Activated T-helper 1 cell treated with anti-CD3 and anti-CD28 coated beads, Interleukin-12 subunit alpha, Interleukin-12 subunit beta, Interleukin-2, Interleukin-4 antibody, amounts not matched to agents 30 ng/mL and 10 ng/mL and 1 ng/mL, durations not matched to agents 14 hours and 24 hours and 36 hours (primary cell): ENCODE measurements at regions of chr17 and their contacts with region 1.

Region 1: DNA sequence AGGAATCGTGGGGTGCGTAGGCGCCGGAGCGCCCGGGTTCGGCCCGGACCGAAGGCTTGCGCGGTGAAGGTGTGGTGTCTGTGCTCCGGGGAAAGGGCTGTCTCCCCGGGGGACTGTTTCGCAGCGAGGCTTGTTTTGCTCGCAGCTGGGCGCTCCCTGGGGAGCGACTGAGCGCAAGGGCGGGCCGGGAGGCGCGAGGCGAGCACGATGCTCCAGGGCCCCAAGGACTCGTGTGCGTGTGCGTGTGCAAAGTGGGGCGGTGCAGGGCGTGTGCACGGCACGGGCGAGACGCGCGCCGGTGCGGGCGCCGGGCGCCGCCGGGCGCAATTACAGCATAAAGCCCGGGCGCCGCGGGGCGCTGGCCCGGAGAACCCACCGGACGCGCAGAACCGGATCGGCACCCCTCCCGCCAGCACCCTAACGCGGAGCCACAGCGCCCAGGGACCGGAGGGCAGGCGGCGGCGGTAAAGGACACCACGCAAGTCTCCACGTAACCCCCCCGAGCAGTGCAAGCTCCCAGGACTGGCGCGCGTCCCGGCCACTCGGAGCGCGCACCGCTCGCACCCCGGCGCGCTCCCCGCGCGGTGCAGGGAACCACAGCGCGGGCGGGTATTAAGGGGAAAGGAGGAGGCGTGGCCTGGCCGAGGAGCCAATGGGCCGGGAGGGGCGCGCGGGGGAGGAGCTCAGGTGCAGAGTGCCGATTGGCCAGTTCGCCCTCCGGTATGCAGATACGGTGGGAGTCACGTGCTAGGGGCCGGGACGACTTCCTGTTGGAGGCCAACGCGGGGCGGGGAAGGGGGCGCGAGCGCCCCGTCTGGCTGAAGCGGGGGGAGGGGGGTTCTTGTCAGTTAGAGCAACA is at the start of gene TNRC6C:
- DNase-seq: peak; percentile 99
- H3K4me3 Mint-ChIP-seq: peak within 1 kb of the TSS; percentile 95
- H3K27ac Mint-ChIP-seq: peak within 1 kb of the TSS; percentile 89
- H3K4me1 Mint-ChIP-seq: peaks cover 44% of the 10 kb centered on the region
- H3K27me3 Mint-ChIP-seq: peaks cover 42% of the 10 kb centered on the region
- total RNA-seq, gene TNRC6C: 15.5 and 19.6 TPM in 2 replicates

Region 2: DNA sequence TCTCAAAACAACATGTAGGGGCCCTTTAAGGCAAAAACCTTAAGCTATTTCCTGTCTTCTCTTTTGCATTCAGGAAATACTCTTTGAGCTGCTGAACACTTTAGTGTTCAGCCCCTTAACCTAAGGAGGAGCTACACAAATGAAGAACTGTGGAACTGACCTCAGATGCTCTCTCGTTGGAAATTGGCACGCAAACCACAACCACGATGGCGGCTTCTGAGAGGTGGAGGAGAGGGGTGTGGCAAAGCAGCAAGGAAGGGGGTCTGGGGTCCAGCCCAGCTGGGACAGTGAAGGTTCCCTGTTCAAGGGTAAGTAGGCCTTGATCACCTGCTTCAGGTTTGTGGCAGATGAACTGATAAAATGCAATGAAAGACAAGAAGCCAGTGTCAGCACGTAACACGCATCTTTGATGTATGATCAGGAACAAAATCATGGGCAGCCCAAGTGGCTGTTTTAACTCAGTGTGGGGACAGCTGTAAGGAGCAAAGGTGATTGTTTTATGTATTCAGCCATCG is 291.1 kb before region 1 on chr17:
- intact Hi-C with region 1: loop called (anchors 1 kb)
- DNase-seq: peak; percentile 77
- H3K4me3 Mint-ChIP-seq: peak overlapping the region; percentile 88
- H3K27ac Mint-ChIP-seq: peak overlapping the region; percentile 97
- H3K4me1 Mint-ChIP-seq: peaks cover 35% of the 10 kb centered on the region
- H3K27me3 Mint-ChIP-seq: no peaks in the 10 kb centered on the region

Region 3: DNA sequence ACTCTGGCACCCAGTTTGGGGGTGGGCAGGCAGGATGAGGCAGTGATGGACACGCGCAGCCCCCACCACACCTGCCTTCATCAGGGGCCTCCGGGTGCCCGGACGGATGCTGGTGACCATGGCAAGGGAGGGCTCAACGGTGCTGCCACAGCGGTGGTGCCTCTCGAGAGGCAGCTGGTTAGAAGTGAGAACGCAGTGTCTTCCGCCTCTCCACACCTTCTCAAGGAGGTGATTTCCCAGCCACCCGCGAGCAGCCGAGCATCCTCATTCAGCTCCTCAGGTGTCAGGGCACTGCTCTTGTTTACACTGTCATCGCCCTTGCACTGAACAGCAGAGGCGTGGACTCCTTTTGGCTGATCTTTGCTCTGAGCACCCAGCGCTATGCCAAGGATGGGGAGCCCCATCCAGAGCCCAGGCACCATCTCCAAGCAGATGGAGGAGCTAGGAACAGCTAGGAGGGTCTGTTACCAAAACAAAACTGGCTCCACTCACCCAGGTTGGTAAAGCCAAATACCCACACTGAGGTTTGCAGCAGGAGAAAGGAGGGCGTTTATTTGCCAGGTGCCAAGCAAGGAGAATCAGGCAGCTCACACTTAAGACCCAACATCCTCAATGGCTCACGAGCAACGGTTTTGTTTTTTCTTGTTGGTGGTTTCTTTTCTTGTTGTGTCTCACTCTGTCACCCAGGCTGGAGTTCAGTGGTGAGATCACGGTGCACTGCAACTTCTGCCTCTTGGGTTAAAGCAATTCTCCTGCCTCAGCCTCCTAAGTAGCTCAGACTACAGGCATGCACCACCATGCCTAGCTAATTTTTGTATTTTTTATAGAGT is 173.9 kb before region 1 on chr17:
- intact Hi-C with region 1: loop called (anchors 1 kb)
- DNase-seq: peak; percentile 71
- H3K4me3 Mint-ChIP-seq: peak overlapping the region; percentile 37
- H3K27ac Mint-ChIP-seq: peak overlapping the region; percentile 75
- H3K4me1 Mint-ChIP-seq: peaks cover 21% of the 10 kb centered on the region
- H3K27me3 Mint-ChIP-seq: peaks cover 26% of the 10 kb centered on the region

Region 4: GRCh38 chr17:77834170-77835115 is 123.6 kb before region 1 on chr17:
- intact Hi-C with region 1: loop called (anchors 2 kb)
- DNase-seq: peak; percentile 32
- H3K4me3 Mint-ChIP-seq: no peak overlapping the region
- H3K27ac Mint-ChIP-seq: no peak overlapping the region
- H3K4me1 Mint-ChIP-seq: peaks cover 26% of the 10 kb centered on the region
- H3K27me3 Mint-ChIP-seq: peaks cover 23% of the 10 kb centered on the region

Region 5: GRCh38 chr17:77842528-77843147 is 115.4 kb before region 1 on chr17:
- intact Hi-C with region 1: loop called (anchors 2 kb)
- DNase-seq: no peak
- H3K4me3 Mint-ChIP-seq: peak overlapping the region; percentile 5
- H3K27ac Mint-ChIP-seq: no peak overlapping the region
- H3K4me1 Mint-ChIP-seq: peaks cover 43% of the 10 kb centered on the region
- H3K27me3 Mint-ChIP-seq: peaks cover 21% of the 10 kb centered on the region

Region 6: GRCh38 chr17:77881545-77881944 is 76.5 kb before region 1 on chr17:
- intact Hi-C with region 1: loop called (anchors 2 kb)
- DNase-seq: peak; percentile 82
- H3K4me3 Mint-ChIP-seq: peak overlapping the region; percentile 64
- H3K27ac Mint-ChIP-seq: peak overlapping the region; percentile 95
- H3K4me1 Mint-ChIP-seq: peaks cover 53% of the 10 kb centered on the region
- H3K27me3 Mint-ChIP-seq: peaks cover 15% of the 10 kb centered on the region

Region 7: DNA sequence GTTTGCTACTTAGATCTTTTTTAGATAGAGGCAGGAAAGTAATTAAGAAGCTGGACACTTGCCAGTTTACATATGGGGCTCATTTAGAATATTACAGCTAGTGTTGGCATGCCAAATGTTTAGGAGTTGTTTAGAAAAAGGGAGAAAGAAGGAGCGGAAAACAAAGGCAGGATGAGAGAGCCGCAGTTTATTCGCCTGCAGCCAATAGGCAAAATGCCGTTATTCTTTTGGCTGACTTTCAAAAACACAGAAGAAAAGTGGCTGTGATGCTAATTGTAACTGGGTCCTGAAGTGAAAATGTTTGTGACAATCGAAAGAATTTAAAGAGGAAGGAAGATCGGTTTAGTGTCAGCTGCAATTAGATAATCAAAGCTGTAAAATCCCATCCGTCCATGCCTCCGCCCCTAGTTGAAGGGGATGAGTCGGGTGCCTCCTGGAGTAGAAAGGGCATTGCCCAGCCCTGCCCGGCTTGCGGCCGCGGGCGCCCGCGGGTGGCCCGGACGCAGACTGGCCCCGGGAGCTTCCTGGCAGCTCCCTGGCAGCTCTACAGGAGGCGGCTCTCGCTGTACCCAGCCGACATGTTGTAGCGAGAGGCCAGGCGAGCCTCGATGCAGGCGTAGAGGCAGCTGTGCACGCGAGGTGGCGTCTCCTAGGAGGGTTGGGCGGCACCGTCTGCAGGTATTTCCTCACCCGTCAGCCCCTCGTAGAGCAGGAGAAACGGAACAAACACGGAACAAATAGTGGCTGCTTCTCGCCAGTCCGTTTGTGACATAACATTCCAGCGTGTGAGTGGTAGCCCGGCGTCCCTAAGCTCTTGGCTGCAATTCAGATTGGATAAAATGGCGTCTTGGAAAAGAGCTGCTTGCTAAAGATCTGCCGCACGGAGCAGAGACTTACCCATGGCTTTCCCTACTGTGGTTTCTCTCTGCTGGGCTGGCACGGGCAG is 82.6 kb after region 1 on chr17:
- intact Hi-C with region 1: no loop called
- DNase-seq: no peak
- H3K4me3 Mint-ChIP-seq: peak overlapping the region; percentile 64
- H3K27ac Mint-ChIP-seq: no peak overlapping the region
- H3K4me1 Mint-ChIP-seq: no peaks in the 10 kb centered on the region
- H3K27me3 Mint-ChIP-seq: no peaks in the 10 kb centered on the region

Region 8: DNA sequence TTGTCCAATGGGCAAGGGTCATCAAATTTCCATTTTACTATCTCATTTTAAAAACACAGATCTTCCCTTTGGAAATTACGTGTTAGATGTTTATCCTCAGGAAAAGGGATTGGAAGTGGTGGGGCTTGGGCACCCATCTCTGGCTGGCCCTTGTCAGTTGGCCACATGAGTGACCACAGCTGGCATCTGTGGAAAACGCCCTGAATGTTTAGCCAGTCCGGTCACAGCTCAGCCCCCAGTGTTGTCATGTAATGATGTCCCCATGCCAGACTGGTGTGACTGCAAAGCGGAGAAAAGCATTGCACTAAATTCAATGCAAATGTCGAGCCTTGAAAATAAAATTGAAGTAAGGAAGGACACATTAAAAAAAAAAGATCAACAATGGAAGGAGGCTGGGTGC is 117.5 kb after region 1 on chr17:
- intact Hi-C with region 1: no loop called
- DNase-seq: no peak
- H3K4me3 Mint-ChIP-seq: no peak overlapping the region
- H3K27ac Mint-ChIP-seq: no peak overlapping the region
- H3K4me1 Mint-ChIP-seq: no peaks in the 10 kb centered on the region
- H3K27me3 Mint-ChIP-seq: no peaks in the 10 kb centered on the region